ENCODE measurements at regions of chr3 and their contacts with region 1.

Region 1: DNA sequence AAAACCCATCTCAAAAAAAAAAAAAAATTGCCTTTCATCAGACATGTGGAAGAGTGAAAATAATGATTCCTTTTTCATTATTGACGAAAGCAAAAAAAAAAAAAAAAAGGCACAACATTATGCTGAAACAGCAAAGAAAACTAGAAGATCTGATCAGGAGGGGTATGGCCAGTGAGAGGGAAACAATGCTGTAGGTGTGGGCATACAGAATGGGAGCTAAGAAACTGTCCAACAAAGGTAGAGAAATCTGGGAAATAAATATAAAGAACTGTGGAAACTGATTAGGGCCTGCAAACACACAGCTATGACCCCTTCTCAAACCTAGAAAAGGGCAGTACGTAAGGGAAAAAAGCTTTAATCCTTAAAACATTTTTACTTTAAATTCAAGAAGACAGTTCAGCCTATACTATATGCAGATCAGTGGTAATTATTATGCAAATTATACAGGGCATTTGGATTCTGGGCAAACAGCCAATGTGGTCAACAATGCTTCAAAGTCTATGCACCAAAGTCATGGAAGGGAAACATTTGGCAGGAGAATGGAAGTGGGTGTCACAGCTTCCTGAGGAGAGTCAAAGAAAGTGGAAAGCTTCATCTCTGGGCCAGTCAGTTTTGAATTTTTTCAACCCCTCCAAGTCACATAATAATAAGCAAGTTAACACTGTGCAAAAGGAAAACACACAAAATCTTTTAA is 68.3 kb upstream of the SLC12A8 start:
- DNase-seq: no peak
- H3K4me3 ChIP-seq: no peak overlapping the region
- H3K27ac ChIP-seq: no peak overlapping the region
- H3K4me1 ChIP-seq: no peaks in the 10 kb centered on the region
- H3K27me3 ChIP-seq: no peaks in the 10 kb centered on the region
- CTCF ChIP-seq: no peak

Region 2: GRCh38 chr3:124887177-124887931 is 393.5 kb before region 1 on chr3 and contains the start of gene ITGB5:
- CTCF ChIA-PET with region 1: no interaction called
- POLR2A ChIA-PET with region 1: no interaction called
- intact Hi-C with region 1: no loop called
- DNase-seq: peak; percentile 56 to 89
- H3K4me3 ChIP-seq: peak within 1 kb of the TSS; percentile 84
- H3K27ac ChIP-seq: peak within 1 kb of the TSS; percentile 69
- H3K4me1 ChIP-seq: peaks cover 41% of the 10 kb centered on the region
- H3K27me3 ChIP-seq: no peaks in the 10 kb centered on the region
- CTCF ChIP-seq: no peak
- total RNA-seq, gene ITGB5: 226 and 287 TPM in 2 replicates

Region 3: DNA sequence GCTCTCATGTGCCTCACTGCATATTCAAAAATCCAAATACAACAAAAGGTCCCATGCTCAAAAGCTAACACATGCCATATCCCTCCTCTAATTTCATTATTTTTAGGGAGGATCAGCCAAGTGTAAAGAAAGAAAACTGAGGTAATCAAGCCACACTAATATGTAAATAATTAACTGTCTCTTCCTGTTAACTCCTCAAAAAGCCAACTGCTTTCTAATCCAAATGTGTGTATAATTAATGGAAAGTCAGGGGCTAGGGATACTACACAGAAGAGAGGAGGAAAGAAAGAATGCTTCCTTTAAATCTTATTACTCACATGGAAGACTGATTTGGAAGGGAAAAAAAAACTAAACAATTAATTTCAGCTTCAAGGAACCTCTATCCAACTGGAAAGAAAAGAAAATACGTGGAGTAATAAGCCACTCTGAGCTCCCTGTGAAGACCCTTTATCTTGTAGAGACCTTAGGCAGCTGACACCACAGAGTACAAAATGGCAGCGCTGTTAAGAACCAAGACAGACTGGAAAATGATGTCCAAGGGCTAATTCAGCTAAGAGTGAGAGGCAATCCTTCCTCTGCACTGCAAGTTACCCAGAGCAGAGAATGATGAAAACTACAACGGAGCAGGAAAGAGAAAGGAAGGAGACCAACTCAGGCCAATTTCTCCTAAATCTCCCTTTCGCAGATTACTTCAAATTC is 37.5 kb after region 1 on chr3:
- CTCF ChIA-PET with region 1: no interaction called
- POLR2A ChIA-PET with region 1: interaction called, 27 read pairs
- intact Hi-C with region 1: no loop called
- DNase-seq: no peak
- H3K4me3 ChIP-seq: no peak overlapping the region
- H3K27ac ChIP-seq: peak overlapping the region; percentile 3; the same call in 1 of the 2 replicates
- H3K4me1 ChIP-seq: no peaks in the 10 kb centered on the region
- H3K27me3 ChIP-seq: no peaks in the 10 kb centered on the region
- CTCF ChIP-seq: no peak

Region 4: DNA sequence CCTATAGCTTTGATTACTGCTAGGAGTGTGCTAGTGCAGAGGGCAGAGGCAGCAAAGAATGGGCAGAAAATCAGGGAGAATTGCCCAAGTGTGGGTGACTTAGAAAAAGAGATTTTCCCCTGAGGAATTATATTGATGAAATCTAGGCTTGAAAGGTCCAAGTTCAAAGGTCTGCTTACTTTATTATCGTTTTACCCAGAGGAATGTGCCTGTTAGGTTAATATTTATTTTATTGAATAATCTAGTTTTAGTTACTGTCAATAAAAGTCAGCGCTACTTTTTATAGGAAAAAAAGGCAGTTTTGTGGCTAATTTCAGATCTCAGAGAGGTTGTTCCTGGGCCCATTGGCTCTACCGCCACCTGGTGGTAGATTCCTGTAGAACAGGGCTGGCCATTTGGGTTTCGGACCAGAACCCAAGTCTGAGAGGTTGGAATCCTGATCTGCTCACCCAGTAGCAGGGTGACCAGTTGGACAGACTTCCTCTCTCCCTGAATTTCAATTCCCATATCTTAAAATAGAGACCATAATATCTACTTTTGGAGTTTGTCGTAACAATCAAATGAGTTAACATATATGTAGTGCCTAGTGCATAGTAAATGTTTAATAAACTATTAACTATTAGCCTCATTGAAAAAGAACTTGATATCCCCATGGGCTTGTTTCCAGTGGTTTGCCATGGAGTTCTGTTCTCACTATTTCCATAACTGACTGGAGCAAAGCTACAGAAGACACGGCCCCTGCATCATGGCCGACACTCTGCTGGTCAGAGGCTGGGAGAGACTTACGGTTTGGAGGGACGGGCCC is 157.0 kb after region 1 on chr3:
- CTCF ChIA-PET with region 1: no interaction called
- POLR2A ChIA-PET with region 1: no interaction called
- intact Hi-C with region 1: loop called (anchors 10 kb)
- DNase-seq: peak in 1 of 2 experiments; percentile 51
- H3K4me3 ChIP-seq: no peak overlapping the region
- H3K27ac ChIP-seq: no peak overlapping the region
- H3K4me1 ChIP-seq: peaks cover 8% of the 10 kb centered on the region
- H3K27me3 ChIP-seq: no peaks in the 10 kb centered on the region
- CTCF ChIP-seq: peak; percentile 99

Measured in PC-9 (cell line).